H1 (cell line): ENCODE measurements at regions of chr12 and their contacts with region 1.

Region 1: GRCh38 chr12:6873094-6874014 is at the start of gene SPSB2:
- DNase-seq: peak; percentile 99 to 100
- H3K4me3 ChIP-seq: peak within 1 kb of the TSS; percentile 82 to 95 (median 87)
- H3K27ac ChIP-seq: peak within 1 kb of the TSS; percentile 61
- H3K4me1 ChIP-seq: peaks cover 2 to 33% (median 14%) of the 10 kb centered on the region in 4 experiments
- H3K27me3 ChIP-seq: no peaks in the 10 kb centered on the region
- CTCF ChIP-seq: no peak
- EP300 ChIP-seq: peak in 1 of 2 experiments; percentile 52; a peak in 1 of 3 replicates
- POLR2A ChIP-seq: no peak
- RAD21 ChIP-seq: peak in 1 of 2 experiments; percentile 9; a peak in 1 of 4 replicates
- total RNA-seq, gene SPSB2: 13.0 and 13.9 TPM in 2 replicates

Region 2: DNA sequence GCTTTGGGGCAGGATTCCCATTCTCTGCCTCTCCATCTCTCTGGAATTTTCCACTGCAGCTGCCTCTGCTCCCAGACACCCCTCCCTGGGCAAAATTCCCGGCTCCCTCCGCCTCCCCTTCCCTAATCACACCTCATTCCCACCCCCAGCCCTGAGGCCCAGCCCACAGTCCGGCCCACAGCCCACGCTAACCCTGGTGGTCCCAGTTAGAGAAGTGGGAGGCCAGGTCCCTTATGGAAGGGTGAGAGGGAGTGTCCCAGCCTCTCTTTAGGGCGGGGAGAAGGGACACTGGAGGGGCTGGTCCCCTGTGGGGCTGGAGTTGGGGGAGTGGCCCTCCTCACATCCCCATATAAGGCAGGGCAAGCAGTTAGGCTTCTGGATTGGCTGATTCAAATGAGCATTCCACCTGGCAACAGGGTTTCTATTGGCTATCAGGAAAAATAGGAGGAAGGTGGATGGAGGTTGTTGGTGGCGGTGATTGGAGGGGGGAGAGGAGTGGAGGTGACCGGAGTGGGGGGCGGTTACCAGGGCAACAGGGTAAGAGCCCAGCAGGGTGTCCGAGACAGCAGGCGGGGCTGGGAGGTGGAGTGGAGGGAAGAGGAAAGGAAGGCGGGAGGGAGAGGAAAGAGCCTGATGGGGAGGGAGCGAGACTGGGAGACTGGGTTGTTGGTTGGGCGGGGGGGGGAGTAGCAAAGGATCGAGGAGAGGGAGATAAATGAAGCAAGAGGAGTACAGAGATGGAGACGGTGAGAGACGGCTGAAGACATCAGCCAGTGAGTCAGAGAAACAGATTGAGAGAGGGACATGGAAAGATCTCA is 109.1 kb before region 1 on chr12:
- CTCF ChIA-PET with region 1: interaction called, 3 read pairs
- POLR2A ChIA-PET with region 1: interaction called, 55 read pairs
- DNase-seq: peak; percentile 91 to 94
- H3K4me3 ChIP-seq: peak overlapping the region in 2 of 4 experiments; percentile 6 to 98; a peak in 4 of 8 replicates
- H3K27ac ChIP-seq: peak overlapping the region; percentile 77
- H3K4me1 ChIP-seq: peaks cover 8 to 21% (median 14%) of the 10 kb centered on the region in 4 experiments
- H3K27me3 ChIP-seq: no peaks in the 10 kb centered on the region
- CTCF ChIP-seq: no peak
- EP300 ChIP-seq: peak in 1 of 2 experiments; percentile 57; a peak in 1 of 3 replicates
- POLR2A ChIP-seq: peak in 1 of 2 experiments; percentile 33; a peak in 1 of 3 replicates
- RAD21 ChIP-seq: no peak

Region 3: DNA sequence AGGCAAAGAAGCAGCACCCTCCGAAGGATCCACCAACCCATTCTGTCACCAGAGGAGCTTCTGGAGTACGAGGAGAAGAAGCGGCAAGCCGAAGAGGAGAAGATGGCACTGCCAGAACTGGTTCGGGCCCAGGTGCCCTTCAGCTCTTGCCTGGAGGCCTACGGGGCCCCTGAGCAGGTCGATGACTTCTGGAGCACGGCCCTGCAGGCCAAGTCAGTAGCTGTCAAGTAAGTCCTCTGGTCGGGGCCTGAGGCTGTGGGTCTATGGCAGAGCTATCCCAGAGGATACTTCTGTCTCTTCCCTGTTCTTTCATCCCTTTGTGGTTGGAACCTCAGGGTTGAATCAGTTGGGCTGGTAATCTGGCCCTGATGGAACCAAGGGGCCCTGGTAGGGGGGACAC is 12.0 kb before region 1 on chr12:
- CTCF ChIA-PET with region 1: interaction called, 27 read pairs
- POLR2A ChIA-PET with region 1: interaction called, 588 read pairs
- DNase-seq: no peak
- H3K4me3 ChIP-seq: no peak overlapping the region
- H3K27ac ChIP-seq: no peak overlapping the region
- H3K4me1 ChIP-seq: peaks cover 2 to 10% (median 6%) of the 10 kb centered on the region in 4 experiments; a peak in 6 of 7 replicates
- H3K27me3 ChIP-seq: no peaks in the 10 kb centered on the region
- CTCF ChIP-seq: no peak
- EP300 ChIP-seq: no peak
- POLR2A ChIP-seq: no peak
- RAD21 ChIP-seq: no peak

Region 4: GRCh38 chr12:6890789-6891645 is 17.7 kb after region 1 on chr12:
- CTCF ChIA-PET with region 1: interaction called, 84 read pairs
- POLR2A ChIA-PET with region 1: interaction called, 86 read pairs
- DNase-seq: peak; percentile 92 to 99
- H3K4me3 ChIP-seq: peak overlapping the region; percentile 31 to 63 (median 56)
- H3K27ac ChIP-seq: peak overlapping the region; percentile 76
- H3K4me1 ChIP-seq: peaks cover 0 to 9% (median 2%) of the 10 kb centered on the region in 4 experiments; a peak in 4 of 7 replicates
- H3K27me3 ChIP-seq: no peaks in the 10 kb centered on the region
- CTCF ChIP-seq: peak; percentile 72 to 96 (median 78)
- EP300 ChIP-seq: peak in 1 of 2 experiments; percentile 61; a peak in 1 of 3 replicates
- POLR2A ChIP-seq: peak; percentile 71 to 84
- RAD21 ChIP-seq: peak; percentile 42 to 61

Region 5: DNA sequence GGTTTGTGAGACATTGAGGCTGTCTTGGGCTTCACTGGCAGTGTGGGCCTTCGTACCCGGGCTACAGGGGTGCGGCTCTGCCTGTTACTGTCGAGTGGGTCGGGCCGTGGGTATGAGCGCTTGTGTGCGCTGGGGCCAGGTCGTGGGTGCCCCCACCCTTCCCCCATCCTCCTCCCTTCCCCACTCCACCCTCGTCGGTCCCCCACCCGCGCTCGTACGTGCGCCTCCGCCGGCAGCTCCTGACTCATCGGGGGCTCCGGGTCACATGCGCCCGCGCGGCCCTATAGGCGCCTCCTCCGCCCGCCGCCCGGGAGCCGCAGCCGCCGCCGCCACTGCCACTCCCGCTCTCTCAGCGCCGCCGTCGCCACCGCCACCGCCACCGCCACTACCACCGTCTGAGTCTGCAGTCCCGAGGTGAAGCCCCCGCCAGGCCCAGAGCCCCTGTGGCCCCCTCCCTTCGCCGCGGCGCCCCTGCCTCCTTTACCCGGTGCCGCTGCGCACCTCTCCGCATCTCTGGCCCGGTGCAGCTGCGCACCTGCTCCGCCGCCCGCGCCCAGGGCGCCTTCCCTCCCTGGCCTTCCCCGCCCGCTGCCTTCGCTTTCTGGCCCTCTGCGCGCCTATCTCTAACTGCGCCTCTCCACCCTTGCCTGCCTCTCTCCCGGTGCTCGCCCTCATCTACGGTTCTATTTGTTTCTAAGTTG is 41.0 kb after region 1 on chr12 and contains the start of gene ENO2:
- CTCF ChIA-PET with region 1: interaction called, 23 read pairs
- POLR2A ChIA-PET with region 1: interaction called, 304 read pairs
- DNase-seq: peak in 1 of 2 experiments; percentile 72
- H3K4me3 ChIP-seq: peak within 1 kb of the TSS; percentile 67 to 86 (median 78)
- H3K27ac ChIP-seq: 0 out of 2 replicates have a peak within 1 kb of the TSS, but pooled peaks have one; percentile 26
- H3K4me1 ChIP-seq: peaks cover 0 to 18% (median 9%) of the 10 kb centered on the region in 4 experiments; a peak in 6 of 7 replicates
- H3K27me3 ChIP-seq: no peaks in the 10 kb centered on the region
- CTCF ChIP-seq: no peak
- EP300 ChIP-seq: no peak
- POLR2A ChIP-seq: no peak
- RAD21 ChIP-seq: no peak
- total RNA-seq, gene ENO2: 90.9 and 92.4 TPM in 2 replicates

Region 6: DNA sequence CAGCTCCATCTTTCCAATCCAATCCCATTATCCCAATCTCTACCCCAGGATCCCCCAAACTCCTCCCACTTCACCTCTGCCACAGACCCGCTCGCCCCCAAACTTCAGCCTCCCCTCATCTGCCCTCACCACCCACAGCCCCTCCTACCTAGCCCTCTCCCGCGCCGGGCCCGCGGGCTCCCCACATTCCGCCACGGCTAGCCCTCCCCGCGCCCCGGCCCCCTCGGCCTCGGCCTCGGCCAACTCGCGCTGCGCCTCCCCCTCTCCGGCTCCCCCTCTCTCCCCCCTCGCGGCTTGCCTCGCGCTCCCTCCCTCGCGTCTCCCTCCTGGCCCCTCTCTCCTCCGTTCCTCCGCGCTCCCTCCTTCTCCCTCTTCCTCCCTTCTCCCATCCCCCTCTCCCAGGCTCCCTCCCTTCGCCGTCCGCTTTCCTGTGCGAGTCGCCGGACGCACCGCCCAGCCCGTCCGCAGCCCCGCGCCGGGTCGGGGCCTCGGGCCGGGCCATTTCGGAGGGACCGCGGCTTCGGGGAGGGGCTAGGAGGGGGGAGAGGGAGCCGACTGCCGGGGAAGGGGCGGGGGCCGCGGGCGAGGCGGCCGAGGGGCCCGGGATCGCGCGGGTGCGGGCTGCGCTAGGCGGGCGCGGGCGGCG is 54.1 kb after region 1 on chr12 and contains the start of gene ATN1:
- CTCF ChIA-PET with region 1: interaction called, 216 read pairs
- POLR2A ChIA-PET with region 1: interaction called, 442 read pairs
- DNase-seq: peak in 1 of 2 experiments; percentile 83
- H3K4me3 ChIP-seq: peak within 1 kb of the TSS; percentile 90 to 99 (median 92)
- H3K27ac ChIP-seq: peak within 1 kb of the TSS; percentile 17; the same call in 1 of the 2 replicates
- H3K4me1 ChIP-seq: peaks cover 13 to 31% (median 17%) of the 10 kb centered on the region in 4 experiments
- H3K27me3 ChIP-seq: no peaks in the 10 kb centered on the region
- CTCF ChIP-seq: no peak
- EP300 ChIP-seq: peak in 1 of 2 experiments; percentile 62; a peak in 1 of 3 replicates
- POLR2A ChIP-seq: no peak
- RAD21 ChIP-seq: peak in 1 of 2 experiments; percentile 8; a peak in 1 of 4 replicates
- total RNA-seq, gene ATN1: 69.6 and 73.4 TPM in 2 replicates

Region 7: DNA sequence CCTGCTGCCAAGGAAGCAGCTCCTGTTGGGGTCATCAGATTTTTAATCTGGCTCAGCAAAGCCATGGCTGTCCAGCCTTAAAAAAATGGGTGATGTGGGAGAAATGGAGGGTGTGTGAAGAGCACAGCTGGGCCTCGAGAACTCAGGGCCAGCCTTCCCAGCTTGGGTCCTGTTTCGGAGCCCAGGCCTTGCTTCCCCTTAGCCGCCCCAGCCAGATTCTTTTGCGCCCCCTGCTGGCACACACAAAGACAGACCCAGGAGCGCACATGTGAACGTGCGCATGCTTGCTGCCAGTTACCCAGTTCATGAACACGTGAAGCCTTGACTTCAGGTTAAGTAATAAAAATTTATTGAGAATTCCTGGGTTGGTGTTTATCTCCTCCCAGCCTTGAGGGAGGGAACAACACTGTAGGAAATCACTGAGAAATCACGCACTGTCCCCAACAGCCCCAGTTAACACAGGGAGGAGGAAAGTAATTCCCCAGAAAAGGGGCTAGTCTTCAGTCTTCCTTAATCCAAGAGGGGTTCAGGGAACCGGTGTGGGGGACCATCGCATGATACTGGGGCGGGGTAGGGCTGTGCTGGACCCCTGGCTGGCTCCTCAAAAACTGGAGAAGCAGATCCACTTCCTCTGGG is 91.8 kb after region 1 on chr12:
- CTCF ChIA-PET with region 1: interaction called, 21 read pairs
- POLR2A ChIA-PET with region 1: interaction called, 87 read pairs
- DNase-seq: peak in 1 of 2 experiments; percentile 88
- H3K4me3 ChIP-seq: peak overlapping the region in 2 of 4 experiments; percentile 23 to 79; a peak in 2 of 8 replicates
- H3K27ac ChIP-seq: peak overlapping the region; percentile 43; the same call in 1 of the 2 replicates
- H3K4me1 ChIP-seq: peaks cover 12 to 50% (median 32%) of the 10 kb centered on the region in 4 experiments
- H3K27me3 ChIP-seq: no peaks in the 10 kb centered on the region
- CTCF ChIP-seq: peak in 2 of 3 experiments; percentile 78 to 90; a peak in 3 of 4 replicates
- EP300 ChIP-seq: no peak
- POLR2A ChIP-seq: peak in 1 of 2 experiments; percentile 46; a peak in 2 of 3 replicates
- RAD21 ChIP-seq: peak; percentile 64 to 72